A673 (cell line): ENCODE measurements at regions of chr16 and their contacts with region 1.

Region 1: DNA sequence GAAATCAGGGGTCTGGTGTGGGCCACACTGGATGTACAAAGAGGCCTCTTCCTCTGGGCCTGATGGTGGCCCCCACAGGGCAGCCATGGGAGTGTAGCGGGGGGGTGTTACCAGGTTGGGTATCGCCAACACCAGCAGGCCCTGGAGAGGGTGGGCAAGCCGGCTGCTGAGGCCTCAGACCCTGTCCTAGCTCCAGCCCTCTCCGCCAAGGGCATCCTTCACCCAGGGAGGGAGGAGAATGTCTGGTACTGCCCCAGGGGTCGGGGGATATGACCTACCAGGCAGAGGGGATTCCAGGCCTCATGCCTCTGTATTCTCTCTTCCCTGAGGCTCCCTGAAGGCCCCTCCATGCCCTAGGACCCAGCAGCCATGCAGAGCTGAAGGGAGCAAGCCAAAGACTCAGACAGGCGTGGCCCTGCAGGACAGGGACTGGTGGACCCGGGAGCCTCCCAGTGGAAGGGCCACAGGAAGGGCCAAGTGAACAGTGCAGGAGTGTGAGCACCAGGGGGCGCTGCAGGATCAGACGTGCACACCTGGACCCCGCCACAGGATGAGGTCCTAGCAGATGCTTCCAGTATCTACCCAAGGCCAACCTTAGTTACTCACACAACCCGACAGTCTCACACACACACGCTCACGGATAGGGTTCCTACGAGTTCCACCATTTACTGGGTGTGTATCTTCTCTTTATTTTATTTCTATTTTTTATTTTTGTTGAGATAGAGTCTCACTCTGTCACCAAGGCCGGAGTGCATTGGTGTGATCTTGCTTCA is 10.9 kb upstream of the CES4A start:
- DNase-seq: peak; percentile 89
- H3K4me3 ChIP-seq: no peak overlapping the region
- H3K27ac ChIP-seq: no peak overlapping the region
- H3K4me1 ChIP-seq: peaks cover 9% of the 10 kb centered on the region
- H3K27me3 ChIP-seq: no peaks in the 10 kb centered on the region
- CTCF ChIP-seq: peak; percentile 93

Region 2: DNA sequence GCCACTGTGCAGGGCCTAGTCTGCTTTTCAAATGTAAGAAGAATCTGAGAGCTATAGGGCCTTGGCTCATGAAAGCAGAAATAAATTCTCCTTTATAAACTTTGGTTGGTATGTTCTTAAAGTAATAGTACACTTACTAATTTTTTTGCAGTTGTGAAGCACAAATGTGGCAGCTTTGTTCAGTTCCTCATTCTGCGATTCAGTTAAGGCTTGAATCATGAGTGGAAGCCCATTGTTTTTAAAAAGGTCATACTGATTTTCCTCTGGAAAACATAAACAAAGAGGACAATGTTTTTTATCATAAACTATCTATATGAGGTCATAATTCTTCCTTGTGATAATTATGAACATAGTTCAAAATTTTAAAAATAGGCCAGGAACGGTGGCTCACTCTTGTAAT is 202.5 kb before region 1 on chr16:
- CTCF ChIA-PET with region 1: no interaction called
- POLR2A ChIA-PET with region 1: no interaction called
- intact Hi-C with region 1: no loop called
- DNase-seq: no peak
- H3K4me3 ChIP-seq: no peak overlapping the region
- H3K27ac ChIP-seq: no peak overlapping the region
- H3K4me1 ChIP-seq: no peaks in the 10 kb centered on the region
- H3K27me3 ChIP-seq: no peaks in the 10 kb centered on the region
- CTCF ChIP-seq: no peak

Region 3: DNA sequence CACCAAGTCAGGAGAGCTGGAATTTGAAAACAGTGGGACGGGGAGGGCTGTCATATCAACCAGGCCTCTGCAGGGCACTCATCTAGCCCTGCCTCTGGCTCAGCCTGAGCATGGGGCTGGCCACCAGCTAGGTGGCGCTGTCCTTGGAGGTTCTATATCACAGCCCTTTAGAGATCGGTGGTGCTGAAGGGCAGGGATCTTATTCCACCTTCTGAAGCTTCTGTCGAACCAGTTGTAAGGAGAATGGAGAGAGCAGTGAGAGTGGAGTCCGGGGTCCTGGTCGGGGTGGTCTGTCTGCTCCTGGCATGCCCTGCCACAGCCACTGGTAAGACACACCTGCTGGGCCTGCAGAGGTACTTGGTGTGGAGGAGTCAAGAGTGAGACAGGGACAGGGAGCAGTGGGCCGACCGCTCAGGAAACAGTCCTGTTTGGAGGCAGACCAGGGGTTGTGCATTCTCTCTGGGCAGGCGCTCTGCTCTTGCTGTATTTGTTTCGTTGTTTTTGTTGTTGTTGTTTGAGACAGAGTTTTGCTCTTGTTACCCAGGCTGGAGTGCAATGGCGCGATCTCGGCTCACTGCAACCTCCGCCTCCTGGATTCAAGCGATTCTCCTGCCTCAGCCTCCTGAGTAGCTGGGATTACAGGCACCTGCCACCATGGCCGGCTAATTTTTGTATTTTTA is 16.3 kb before region 1 on chr16 and contains the start of gene CES3:
- CTCF ChIA-PET with region 1: interaction called, 10 read pairs
- POLR2A ChIA-PET with region 1: no interaction called
- intact Hi-C with region 1: no loop called
- DNase-seq: peak; percentile 88
- H3K4me3 ChIP-seq: peak within 1 kb of the TSS; percentile 30
- H3K27ac ChIP-seq: no peak within 1 kb of the TSS
- H3K4me1 ChIP-seq: peaks cover 4% of the 10 kb centered on the region
- H3K27me3 ChIP-seq: no peaks in the 10 kb centered on the region
- CTCF ChIP-seq: peak; percentile 99
- total RNA-seq, gene CES3: 3.0 and 3.9 TPM in 2 replicates

Region 4: DNA sequence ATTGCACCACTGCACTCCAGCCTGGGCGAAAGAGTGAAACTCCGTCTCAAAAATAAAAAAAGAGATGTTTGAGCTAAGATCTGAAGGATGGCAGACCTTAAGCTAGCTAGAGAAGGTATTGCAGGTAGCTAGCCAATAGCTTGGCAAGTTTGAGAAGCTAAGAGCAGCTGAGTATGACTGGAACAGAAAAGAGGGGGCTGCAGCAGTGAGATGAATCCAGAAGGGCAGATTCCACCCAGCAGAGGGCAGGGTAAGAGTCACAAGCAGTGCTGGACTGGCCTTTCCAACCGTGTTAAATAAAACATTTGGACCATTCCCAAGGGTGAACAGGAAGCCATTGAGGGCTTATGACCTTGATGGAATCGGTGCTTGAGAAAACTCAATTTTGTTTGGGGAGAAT is 126.5 kb after region 1 on chr16:
- CTCF ChIA-PET with region 1: interaction called, 3 read pairs
- POLR2A ChIA-PET with region 1: no interaction called
- intact Hi-C with region 1: loop called (anchors 5 kb)
- DNase-seq: no peak
- H3K4me3 ChIP-seq: no peak overlapping the region
- H3K27ac ChIP-seq: no peak overlapping the region
- H3K4me1 ChIP-seq: peaks cover 3% of the 10 kb centered on the region
- H3K27me3 ChIP-seq: no peaks in the 10 kb centered on the region
- CTCF ChIP-seq: peak; percentile 34; the same call in 1 of the 2 replicates

Region 5: GRCh38 chr16:67129422-67129821 is 151.9 kb after region 1 on chr16:
- CTCF ChIA-PET with region 1: no interaction called
- POLR2A ChIA-PET with region 1: no interaction called
- intact Hi-C with region 1: no loop called
- DNase-seq: no peak
- H3K4me3 ChIP-seq: no peak overlapping the region
- H3K27ac ChIP-seq: no peak overlapping the region
- H3K4me1 ChIP-seq: no peaks in the 10 kb centered on the region
- H3K27me3 ChIP-seq: no peaks in the 10 kb centered on the region
- CTCF ChIP-seq: no peak

Region 6: GRCh38 chr16:67183627-67184328 is 206.3 kb after region 1 on chr16 and contains the start of gene MATCAP1:
- CTCF ChIA-PET with region 1: no interaction called
- POLR2A ChIA-PET with region 1: no interaction called
- intact Hi-C with region 1: loop called (anchors 1 kb)
- DNase-seq: peak; percentile 99
- H3K4me3 ChIP-seq: peak within 1 kb of the TSS; percentile 68
- H3K27ac ChIP-seq: peak within 1 kb of the TSS; percentile 99
- H3K4me1 ChIP-seq: peaks cover 14% of the 10 kb centered on the region
- H3K27me3 ChIP-seq: no peaks in the 10 kb centered on the region
- CTCF ChIP-seq: no peak
- total RNA-seq, gene MATCAP1: 33.9 and 36.8 TPM in 2 replicates